Activated T-helper 1 cell treated with anti-CD3 and anti-CD28 coated beads, Interleukin-12 subunit alpha, Interleukin-12 subunit beta, Interleukin-2, Interleukin-4 antibody, amounts not matched to agents 30 ng/mL and 10 ng/mL and 1 ng/mL, durations not matched to agents 14 hours and 24 hours and 36 hours (primary cell): ENCODE measurements at regions of chr15 and their contacts with region 1.

Region 1: GRCh38 chr15:60557191-60557618 is 78.3 kb upstream of the ICE2 start:
- DNase-seq: no peak
- H3K4me3 Mint-ChIP-seq: peak overlapping the region; percentile 28
- H3K27ac Mint-ChIP-seq: peak overlapping the region; percentile 85
- H3K4me1 Mint-ChIP-seq: peaks cover 67% of the 10 kb centered on the region
- H3K27me3 Mint-ChIP-seq: no peaks in the 10 kb centered on the region

Region 2: DNA sequence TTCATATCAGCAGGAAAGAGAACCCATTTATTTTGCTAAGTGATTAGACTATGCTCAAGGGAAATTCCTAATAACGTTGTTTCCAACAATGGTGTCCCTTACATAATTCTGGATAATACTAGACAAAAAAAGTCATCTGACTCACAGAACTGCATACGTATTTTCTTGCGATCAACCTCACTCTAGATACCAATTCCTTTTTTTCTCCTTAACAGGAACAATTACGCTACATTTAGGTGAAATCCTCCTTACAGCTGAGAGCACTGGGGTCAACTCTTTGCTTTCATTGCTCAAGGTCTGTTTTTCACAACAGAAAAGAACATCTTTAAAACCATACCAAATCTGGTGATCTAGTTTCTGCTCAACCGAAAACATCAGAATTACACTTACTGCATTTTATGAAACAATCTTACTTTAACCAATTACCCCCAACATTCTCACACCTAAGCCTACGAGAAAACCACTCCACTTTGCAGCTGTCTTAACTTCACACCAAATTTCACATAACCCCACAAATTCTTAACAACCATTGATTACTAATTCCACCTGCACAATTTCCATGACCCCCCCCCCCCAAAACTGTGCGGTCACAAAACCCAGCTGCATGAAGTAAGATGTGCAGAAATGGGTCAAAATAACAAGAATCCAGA is 17.1 kb before region 1 on chr15:
- intact Hi-C with region 1: loop called (anchors 1 kb)
- DNase-seq: no peak
- H3K4me3 Mint-ChIP-seq: peak overlapping the region; percentile 28
- H3K27ac Mint-ChIP-seq: peak overlapping the region; percentile 91
- H3K4me1 Mint-ChIP-seq: peaks cover 86% of the 10 kb centered on the region
- H3K27me3 Mint-ChIP-seq: no peaks in the 10 kb centered on the region

Region 3: DNA sequence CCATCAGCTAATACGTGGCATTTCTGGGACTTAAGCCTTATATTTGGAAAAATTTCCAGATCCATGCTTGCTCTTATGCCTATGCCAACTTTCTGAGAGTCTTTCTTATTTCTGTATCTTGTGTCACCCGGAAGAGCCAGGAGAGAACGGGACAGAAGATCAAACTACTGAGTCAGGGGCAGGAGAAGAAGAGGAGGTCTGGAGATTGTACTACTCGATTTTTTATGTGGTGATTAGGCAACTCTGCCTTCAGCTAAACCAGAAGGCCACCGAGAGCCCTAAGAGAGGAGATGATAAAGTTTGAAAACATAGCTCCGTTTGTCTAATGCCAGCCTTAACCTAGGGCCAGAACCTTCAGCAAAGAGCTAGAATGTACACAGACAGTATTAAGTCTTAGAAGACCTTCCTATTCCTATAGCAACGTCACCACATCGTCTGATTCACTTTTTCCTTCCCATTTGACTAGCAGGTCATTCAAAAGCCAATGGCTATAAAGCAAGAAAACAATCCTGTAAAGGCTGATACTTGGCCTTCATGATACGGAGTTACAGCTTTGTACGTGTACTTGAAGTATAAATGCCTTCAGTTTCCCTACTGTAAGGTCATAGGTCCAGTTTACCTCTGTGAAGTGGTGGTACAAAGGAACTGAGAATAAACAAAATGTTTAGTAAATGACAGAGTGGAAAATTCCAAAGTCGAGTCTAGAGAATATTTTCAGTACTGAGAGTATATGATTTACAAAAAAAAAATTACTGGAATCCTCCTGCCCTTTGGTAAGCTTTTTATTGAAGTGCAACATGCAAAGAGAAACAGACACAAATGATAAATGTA is 17.8 kb after region 1 on chr15:
- intact Hi-C with region 1: loop called (anchors 1 kb)
- DNase-seq: no peak
- H3K4me3 Mint-ChIP-seq: peak overlapping the region; percentile 79
- H3K27ac Mint-ChIP-seq: peak overlapping the region; percentile 99
- H3K4me1 Mint-ChIP-seq: peaks cover 80% of the 10 kb centered on the region
- H3K27me3 Mint-ChIP-seq: no peaks in the 10 kb centered on the region